T-cell (primary cell): ENCODE measurements at regions of chr12 and their contacts with region 1.

Region 1: GRCh38 chr12:2179953-2180736 is 127.4 kb downstream of the CACNA1C start:
- DNase-seq: no peak
- ATAC-seq: no peak
- H3K4me3 ChIP-seq: no peak overlapping the region
- H3K4me3 Mint-ChIP-seq: no peak overlapping the region
- H3K27ac ChIP-seq: no peak overlapping the region
- H3K27ac Mint-ChIP-seq: no peak overlapping the region
- H3K4me1 ChIP-seq: no peaks in the 10 kb centered on the region
- H3K4me1 Mint-ChIP-seq: peaks cover 4 to 8% (median 6%) of the 10 kb centered on the region in 3 donors
- H3K27me3 ChIP-seq: peaks cover 0 to 26% of the 10 kb centered on the region in 2 experiments
- H3K27me3 Mint-ChIP-seq: peaks cover 10 to 33% of the 10 kb centered on the region in 2 donors

Region 2: DNA sequence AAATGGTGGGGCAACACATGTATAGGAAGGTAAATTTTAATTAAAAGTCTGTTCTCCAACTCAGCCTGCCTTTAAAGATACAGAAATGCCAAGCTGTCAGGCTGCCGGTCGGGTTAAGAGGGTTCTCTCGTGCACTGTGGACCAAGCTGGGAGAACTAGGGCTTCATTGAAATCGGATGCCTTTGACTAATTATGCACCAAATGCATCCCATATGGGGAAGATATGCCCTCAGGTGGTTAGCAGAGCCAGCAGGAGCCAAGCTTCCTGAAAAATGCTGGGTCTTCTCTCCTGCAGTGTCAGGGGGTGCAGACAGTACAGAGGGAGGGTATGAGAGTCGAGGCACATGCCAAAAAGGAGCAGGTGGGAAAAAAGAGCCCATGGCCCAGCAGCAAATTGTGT is 108.7 kb after region 1 on chr12:
- CTCF ChIA-PET with region 1: interaction called in 1 of 2 experiments, 10 read pairs
- POLR2A ChIA-PET with region 1: no interaction called
- DNase-seq: no peak
- ATAC-seq: no peak
- H3K4me3 ChIP-seq: no peak overlapping the region
- H3K4me3 Mint-ChIP-seq: no peak overlapping the region
- H3K27ac ChIP-seq: no peak overlapping the region
- H3K27ac Mint-ChIP-seq: no peak overlapping the region
- H3K4me1 ChIP-seq: peaks cover 0 to under 1% of the 10 kb centered on the region in 2 experiments
- H3K4me1 Mint-ChIP-seq: peaks cover 0 to 5% (median 0%) of the 10 kb centered on the region in 3 donors
- H3K27me3 ChIP-seq: peaks cover 0 to 16% of the 10 kb centered on the region in 2 experiments
- H3K27me3 Mint-ChIP-seq: peaks cover 19 to 44% of the 10 kb centered on the region in 2 donors